PC-9 (cell line): ENCODE measurements at regions of chr10 and their contacts with region 1.

Region 1: DNA sequence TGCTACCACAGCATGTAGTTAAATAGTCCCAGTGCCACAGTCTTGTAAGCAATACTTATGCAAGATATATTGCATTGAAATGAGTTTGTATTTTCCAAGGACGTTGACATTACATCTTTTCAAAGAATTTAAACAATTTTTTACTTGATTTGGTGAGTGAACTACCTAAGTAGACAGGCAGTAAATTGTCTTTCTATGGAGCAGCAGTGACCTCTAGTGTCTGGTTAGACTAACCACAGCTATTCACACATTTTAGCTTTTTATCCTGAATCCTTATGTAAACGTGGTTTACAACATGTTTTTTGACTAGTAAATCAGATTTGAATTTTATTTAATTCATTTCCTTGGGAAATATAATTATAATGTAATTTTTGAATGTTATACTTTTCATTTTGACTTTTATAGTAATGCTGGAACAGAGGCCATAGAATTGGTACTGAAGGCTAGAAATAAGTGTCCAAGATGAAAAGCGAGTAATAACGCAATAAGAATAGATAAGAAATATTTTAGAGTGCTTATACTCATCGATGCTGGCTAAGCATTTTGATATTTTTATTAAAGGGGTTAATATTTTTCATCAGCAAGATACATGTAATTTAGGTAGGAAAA is 5.6 kb downstream of the LRRTM3 start:
- DNase-seq: no peak
- H3K4me3 ChIP-seq: no peak overlapping the region
- H3K27ac ChIP-seq: no peak overlapping the region
- H3K4me1 ChIP-seq: no peaks in the 10 kb centered on the region
- H3K27me3 ChIP-seq: no peaks in the 10 kb centered on the region; the same call in 1 of the 2 replicates
- CTCF ChIP-seq: peak; percentile 92

Region 2: DNA sequence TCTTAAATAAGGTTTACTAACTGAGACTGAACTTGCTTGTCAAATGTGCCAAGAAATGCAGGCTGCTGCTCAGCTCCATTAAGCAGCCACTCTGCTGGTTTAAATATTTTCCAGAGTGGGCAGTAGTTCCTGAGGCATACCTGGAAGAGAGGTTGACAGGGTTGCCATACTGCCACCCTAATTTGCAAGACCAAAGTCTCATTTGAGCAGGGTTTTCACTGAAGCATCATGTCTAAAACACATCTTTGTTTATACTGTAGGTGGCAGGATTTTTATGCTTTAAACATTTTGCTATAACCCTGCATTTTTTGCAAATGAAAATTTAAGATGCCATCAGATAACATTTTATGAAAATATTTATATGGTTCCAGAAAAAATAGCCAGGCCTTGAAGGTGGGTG is 623.6 kb before region 1 on chr10:
- CTCF ChIA-PET with region 1: no interaction called
- POLR2A ChIA-PET with region 1: no interaction called
- intact Hi-C with region 1: loop called (anchors 10 kb)
- DNase-seq: no peak
- H3K4me3 ChIP-seq: no peak overlapping the region
- H3K27ac ChIP-seq: no peak overlapping the region
- H3K4me1 ChIP-seq: no peaks in the 10 kb centered on the region
- H3K27me3 ChIP-seq: no peaks in the 10 kb centered on the region
- CTCF ChIP-seq: no peak

Region 3: DNA sequence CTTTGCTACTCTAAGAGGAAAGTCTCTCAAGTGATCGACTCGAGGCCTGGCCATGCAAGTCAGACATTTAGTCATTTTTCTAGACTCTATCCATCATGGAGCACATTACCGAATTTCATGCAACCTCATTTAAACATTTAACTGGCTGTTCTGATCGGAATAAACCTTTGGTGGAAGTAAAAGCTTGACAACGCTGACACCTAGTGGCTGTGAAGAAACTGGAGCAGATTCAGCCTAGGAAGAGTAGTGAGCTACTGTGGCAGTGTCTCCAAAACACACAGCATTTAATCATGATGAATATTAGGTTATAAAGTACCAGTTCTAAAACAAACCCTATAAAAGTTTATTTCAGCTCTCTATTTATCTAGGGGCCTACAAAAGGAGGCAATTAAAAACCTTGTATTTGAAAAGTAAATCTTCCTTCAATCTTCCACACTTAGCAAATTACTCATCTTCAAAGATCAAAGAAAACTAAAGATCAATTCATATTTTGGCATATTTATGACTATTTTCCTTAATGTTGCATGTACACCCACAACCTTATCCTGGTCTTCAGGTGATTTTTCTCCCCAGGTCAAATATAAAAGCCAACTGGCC is 589.6 kb after region 1 on chr10:
- CTCF ChIA-PET with region 1: no interaction called
- POLR2A ChIA-PET with region 1: no interaction called
- intact Hi-C with region 1: loop called (anchors 5 kb)
- DNase-seq: peak; percentile 31 to 42
- H3K4me3 ChIP-seq: no peak overlapping the region
- H3K27ac ChIP-seq: no peak overlapping the region
- H3K4me1 ChIP-seq: no peaks in the 10 kb centered on the region
- H3K27me3 ChIP-seq: no peaks in the 10 kb centered on the region
- CTCF ChIP-seq: peak; percentile 87